ENCODE measurements at regions of chr5 and their contacts with region 1.

Region 1: GRCh38 chr5:66171349-66172344 is 27.5 kb downstream of the SREK1 start:
- DNase-seq: no peak
- ATAC-seq: peak in 2 of 4 donors; percentile 55 to 56
- H3K4me3 ChIP-seq: no peak overlapping the region
- H3K27ac ChIP-seq: no peak overlapping the region
- H3K4me1 ChIP-seq: peaks cover 0 to 10% (median 0%) of the 10 kb centered on the region in 12 donors
- H3K27me3 ChIP-seq: no peaks in the 10 kb centered on the region
- CTCF ChIP-seq: peak; percentile 14 to 71 (median 55)
- POLR2A ChIP-seq: no peak

Region 2: DNA sequence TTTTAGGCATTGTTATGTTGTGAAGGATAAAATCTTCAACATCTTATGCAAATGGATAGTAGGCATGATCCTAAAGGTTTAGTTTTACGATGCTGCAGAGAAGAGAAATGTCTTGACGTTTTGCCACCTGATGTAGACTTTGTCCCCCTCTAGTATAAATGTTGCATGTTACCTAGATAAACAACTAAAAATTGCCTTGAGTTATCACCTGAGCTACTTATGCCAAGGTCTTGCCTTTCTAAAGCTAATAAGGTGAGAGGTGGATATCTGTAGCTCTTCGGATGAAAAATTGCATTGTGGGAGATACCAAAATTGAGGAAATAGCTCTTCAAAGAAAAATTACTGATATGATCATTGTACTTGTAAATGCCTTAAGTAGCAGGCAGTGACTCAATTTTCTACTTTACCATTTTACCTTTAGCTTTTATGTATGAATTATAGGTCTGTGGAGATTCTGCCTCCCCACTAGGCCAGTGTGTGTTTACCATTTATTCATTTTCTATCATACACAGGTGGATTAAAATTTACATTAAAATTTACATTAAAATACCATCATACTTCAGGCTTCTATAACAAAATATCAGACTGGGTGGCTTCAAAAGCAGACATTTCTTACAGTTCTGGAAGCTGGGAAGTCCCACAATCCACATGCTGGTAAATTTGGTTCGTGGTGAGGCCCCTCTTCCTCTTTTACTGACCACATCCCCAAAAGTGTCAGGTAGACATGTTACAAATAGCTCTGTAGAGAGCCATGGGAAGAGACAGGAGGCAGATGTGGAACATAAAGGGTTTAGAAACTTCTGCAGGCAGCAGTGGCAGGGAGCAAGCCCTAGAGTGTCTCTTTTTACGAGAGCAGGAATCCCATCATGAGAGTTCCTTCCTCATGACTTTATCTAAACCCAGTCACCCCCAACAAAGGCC is 346.0 kb before region 1 on chr5:
- intact Hi-C with region 1: no loop called
- DNase-seq: no peak
- ATAC-seq: no peak
- H3K4me3 ChIP-seq: no peak overlapping the region
- H3K27ac ChIP-seq: no peak overlapping the region
- H3K4me1 ChIP-seq: peaks cover 0 to 7% (median 0%) of the 10 kb centered on the region in 12 donors
- H3K27me3 ChIP-seq: no peaks in the 10 kb centered on the region
- CTCF ChIP-seq: no peak
- POLR2A ChIP-seq: no peak

Region 3: DNA sequence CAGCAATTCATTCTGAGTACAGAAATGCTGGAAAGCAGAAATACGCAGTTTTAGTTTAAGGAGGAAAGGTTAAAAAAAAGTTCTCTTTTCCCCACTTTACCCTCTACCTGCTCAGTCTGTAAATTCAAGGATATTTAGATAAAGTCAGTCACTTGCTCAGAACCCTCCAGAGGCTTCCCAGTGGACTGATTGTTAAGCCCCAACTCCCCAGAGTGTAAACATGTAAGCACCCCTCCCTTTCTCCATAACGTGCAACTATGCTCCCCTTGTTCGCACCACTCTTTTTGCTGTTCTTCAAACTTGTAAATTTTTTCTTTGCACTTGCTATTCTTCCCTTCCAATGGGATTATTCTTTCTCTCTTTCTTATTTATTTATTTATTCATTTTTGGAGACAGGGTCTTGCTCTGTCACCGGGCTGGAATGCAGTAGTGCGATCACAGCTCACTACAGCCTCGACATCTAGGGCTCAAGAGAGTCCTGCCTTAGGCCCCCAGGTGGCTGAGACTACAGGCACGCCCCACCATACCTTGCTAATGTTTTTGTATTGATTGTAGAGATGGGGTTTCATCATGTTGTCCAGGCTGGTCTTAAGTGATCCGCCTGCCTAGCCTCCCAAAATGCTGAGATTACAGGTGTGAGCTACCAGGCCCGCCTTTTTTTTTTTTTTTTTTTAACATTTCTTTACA is 277.8 kb before region 1 on chr5:
- intact Hi-C with region 1: no loop called
- DNase-seq: no peak
- ATAC-seq: no peak
- H3K4me3 ChIP-seq: no peak overlapping the region
- H3K27ac ChIP-seq: no peak overlapping the region
- H3K4me1 ChIP-seq: no peaks in the 10 kb centered on the region
- H3K27me3 ChIP-seq: no peaks in the 10 kb centered on the region
- CTCF ChIP-seq: no peak
- POLR2A ChIP-seq: no peak

Region 4: GRCh38 chr5:66769839-66770617 is 598.4 kb after region 1 on chr5:
- intact Hi-C with region 1: loop called in 3 of 10 experiments (anchors 5 to 10 kb)
- DNase-seq: peak in 4 of 5 donors; percentile 16 to 48 (median 39)
- ATAC-seq: peak; percentile 61 to 78 (median 72)
- H3K4me3 ChIP-seq: no peak overlapping the region
- H3K27ac ChIP-seq: peak overlapping the region in 2 of 12 donors; percentile 10 to 14
- H3K4me1 ChIP-seq: peaks cover 0 to 40% (median 14%) of the 10 kb centered on the region in 12 donors
- H3K27me3 ChIP-seq: no peaks in the 10 kb centered on the region
- CTCF ChIP-seq: peak in 10 of 12 donors; percentile 10 to 60 (median 46)
- POLR2A ChIP-seq: no peak

Measured in heart left ventricle (tissue), 16 donors.